Caco-2 (cell line): ENCODE measurements at regions of chr17 and their contacts with region 1.

Region 1: GRCh38 chr17:30093463-30094147 is 23.0 kb upstream of the NSRP1 start:
- DNase-seq: peak; percentile 54 to 86
- H3K4me3 ChIP-seq: no peak overlapping the region
- H3K4me3 Mint-ChIP-seq: no peak overlapping the region
- H3K27ac Mint-ChIP-seq: no peak overlapping the region
- H3K4me1 ChIP-seq: no peaks in the 10 kb centered on the region; the same call in 1 of the 2 replicates
- H3K4me1 Mint-ChIP-seq: peaks cover 5% of the 10 kb centered on the region
- H3K27me3 ChIP-seq: no peaks in the 10 kb centered on the region
- H3K27me3 Mint-ChIP-seq: peaks cover 22% of the 10 kb centered on the region
- CTCF ChIP-seq: peak; percentile 69 to 90

Region 2: GRCh38 chr17:29640413-29640812 is 453.2 kb before region 1 on chr17:
- CTCF ChIA-PET with region 1: interaction called, 12 read pairs
- POLR2A ChIA-PET with region 1: no interaction called
- intact Hi-C with region 1: loop called (anchors 10 kb)
- DNase-seq: no peak
- H3K4me3 ChIP-seq: no peak overlapping the region
- H3K4me3 Mint-ChIP-seq: no peak overlapping the region
- H3K27ac Mint-ChIP-seq: peak overlapping the region; percentile 7
- H3K4me1 ChIP-seq: peaks cover 13% of the 10 kb centered on the region
- H3K4me1 Mint-ChIP-seq: no peaks in the 10 kb centered on the region
- H3K27me3 ChIP-seq: no peaks in the 10 kb centered on the region
- H3K27me3 Mint-ChIP-seq: no peaks in the 10 kb centered on the region
- CTCF ChIP-seq: no peak

Region 3: DNA sequence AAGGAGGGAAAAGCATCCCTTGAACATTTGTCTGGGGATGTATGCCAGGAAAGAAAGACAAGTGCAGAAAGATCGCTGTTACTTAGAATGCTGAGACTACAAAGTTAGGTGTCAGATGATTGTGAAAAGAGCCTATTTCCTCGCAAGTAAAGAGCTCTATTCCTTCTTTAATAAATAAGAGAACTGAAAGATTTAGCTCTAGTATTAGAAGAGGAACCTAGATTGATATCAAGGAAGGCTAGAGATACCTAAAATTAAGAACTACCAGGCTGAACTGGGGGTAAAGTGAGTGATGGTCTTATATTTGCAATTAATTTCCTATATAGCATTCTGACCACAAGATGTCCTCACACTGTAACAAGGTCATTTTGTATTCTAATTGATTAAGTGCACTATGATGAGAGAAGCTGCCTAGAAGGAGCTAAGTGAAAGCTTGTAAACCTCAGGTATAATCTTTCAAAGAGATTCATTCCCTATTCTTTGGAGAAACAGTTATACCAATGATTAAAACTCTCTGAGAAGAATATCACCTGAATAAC is 225.9 kb before region 1 on chr17:
- CTCF ChIA-PET with region 1: interaction called, 15 read pairs
- POLR2A ChIA-PET with region 1: no interaction called
- intact Hi-C with region 1: loop called (anchors 10 kb)
- DNase-seq: no peak
- H3K4me3 ChIP-seq: no peak overlapping the region
- H3K4me3 Mint-ChIP-seq: no peak overlapping the region
- H3K27ac Mint-ChIP-seq: no peak overlapping the region
- H3K4me1 ChIP-seq: no peaks in the 10 kb centered on the region
- H3K4me1 Mint-ChIP-seq: no peaks in the 10 kb centered on the region
- H3K27me3 ChIP-seq: no peaks in the 10 kb centered on the region
- H3K27me3 Mint-ChIP-seq: no peaks in the 10 kb centered on the region
- CTCF ChIP-seq: peak; percentile 21 to 44

Region 4: GRCh38 chr17:30005709-30006320 is 87.8 kb before region 1 on chr17:
- CTCF ChIA-PET with region 1: no interaction called
- POLR2A ChIA-PET with region 1: no interaction called
- intact Hi-C with region 1: no loop called
- DNase-seq: peak; percentile 47 to 59
- H3K4me3 ChIP-seq: no peak overlapping the region
- H3K4me3 Mint-ChIP-seq: peak overlapping the region; percentile 60
- H3K27ac Mint-ChIP-seq: peak overlapping the region; percentile 72
- H3K4me1 ChIP-seq: peaks cover 22% of the 10 kb centered on the region
- H3K4me1 Mint-ChIP-seq: peaks cover 11% of the 10 kb centered on the region
- H3K27me3 ChIP-seq: no peaks in the 10 kb centered on the region
- H3K27me3 Mint-ChIP-seq: no peaks in the 10 kb centered on the region
- CTCF ChIP-seq: no peak

Region 5: DNA sequence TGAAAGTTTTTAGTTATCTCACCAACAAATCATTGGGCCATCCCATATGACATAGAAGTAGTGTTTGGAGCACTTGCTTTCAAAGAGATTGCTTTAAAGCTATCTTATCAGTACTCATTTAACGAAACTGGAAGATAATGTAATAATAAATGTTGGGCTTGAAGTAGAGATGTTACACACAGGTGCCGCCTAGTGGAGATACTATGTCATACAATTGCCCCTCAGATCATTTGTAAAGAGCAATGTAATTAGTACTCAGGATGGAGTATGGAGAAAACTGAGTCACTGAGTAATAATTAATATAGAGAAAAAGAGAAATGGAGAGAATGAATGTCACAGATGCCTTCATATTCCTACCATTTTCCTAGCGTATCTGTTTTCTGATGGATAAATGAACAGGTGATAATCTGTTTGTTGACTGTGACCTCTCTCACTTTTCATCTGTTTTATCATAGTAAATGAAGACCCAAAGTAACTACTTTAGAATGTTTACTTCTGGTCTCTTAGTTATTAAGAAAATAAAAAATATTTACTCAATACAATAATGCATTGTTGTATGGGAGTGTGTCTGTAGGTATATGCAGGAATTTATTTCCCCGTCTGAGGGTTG is 71.8 kb before region 1 on chr17:
- CTCF ChIA-PET with region 1: interaction called, 11 read pairs
- POLR2A ChIA-PET with region 1: no interaction called
- intact Hi-C with region 1: loop called (anchors 1 kb)
- DNase-seq: peak in 1 of 2 experiments; percentile 50
- H3K4me3 ChIP-seq: no peak overlapping the region
- H3K4me3 Mint-ChIP-seq: no peak overlapping the region
- H3K27ac Mint-ChIP-seq: no peak overlapping the region
- H3K4me1 ChIP-seq: no peaks in the 10 kb centered on the region
- H3K4me1 Mint-ChIP-seq: no peaks in the 10 kb centered on the region
- H3K27me3 ChIP-seq: no peaks in the 10 kb centered on the region
- H3K27me3 Mint-ChIP-seq: peaks cover 7% of the 10 kb centered on the region
- CTCF ChIP-seq: peak; percentile 60 to 85

Region 6: GRCh38 chr17:30104575-30105339 is 11.2 kb after region 1 on chr17:
- CTCF ChIA-PET with region 1: interaction called, 56 read pairs
- POLR2A ChIA-PET with region 1: no interaction called
- intact Hi-C with region 1: no loop called
- DNase-seq: peak; percentile 86 to 90
- H3K4me3 ChIP-seq: peak overlapping the region; percentile 42
- H3K4me3 Mint-ChIP-seq: peak overlapping the region; percentile 73
- H3K27ac Mint-ChIP-seq: peak overlapping the region; percentile 80
- H3K4me1 ChIP-seq: no peaks in the 10 kb centered on the region
- H3K4me1 Mint-ChIP-seq: peaks cover 7% of the 10 kb centered on the region
- H3K27me3 ChIP-seq: no peaks in the 10 kb centered on the region
- H3K27me3 Mint-ChIP-seq: no peaks in the 10 kb centered on the region
- CTCF ChIP-seq: peak; percentile 94 to 97

Region 7: GRCh38 chr17:30134551-30134950 is 40.9 kb after region 1 on chr17:
- CTCF ChIA-PET with region 1: no interaction called
- POLR2A ChIA-PET with region 1: no interaction called
- intact Hi-C with region 1: no loop called
- DNase-seq: no peak
- H3K4me3 ChIP-seq: no peak overlapping the region
- H3K4me3 Mint-ChIP-seq: no peak overlapping the region
- H3K27ac Mint-ChIP-seq: no peak overlapping the region
- H3K4me1 ChIP-seq: no peaks in the 10 kb centered on the region
- H3K4me1 Mint-ChIP-seq: no peaks in the 10 kb centered on the region
- H3K27me3 ChIP-seq: no peaks in the 10 kb centered on the region
- H3K27me3 Mint-ChIP-seq: no peaks in the 10 kb centered on the region
- CTCF ChIP-seq: no peak